GM12878 (cell line): ENCODE measurements at regions of chr2 and their contacts with region 1.

Region 1: DNA sequence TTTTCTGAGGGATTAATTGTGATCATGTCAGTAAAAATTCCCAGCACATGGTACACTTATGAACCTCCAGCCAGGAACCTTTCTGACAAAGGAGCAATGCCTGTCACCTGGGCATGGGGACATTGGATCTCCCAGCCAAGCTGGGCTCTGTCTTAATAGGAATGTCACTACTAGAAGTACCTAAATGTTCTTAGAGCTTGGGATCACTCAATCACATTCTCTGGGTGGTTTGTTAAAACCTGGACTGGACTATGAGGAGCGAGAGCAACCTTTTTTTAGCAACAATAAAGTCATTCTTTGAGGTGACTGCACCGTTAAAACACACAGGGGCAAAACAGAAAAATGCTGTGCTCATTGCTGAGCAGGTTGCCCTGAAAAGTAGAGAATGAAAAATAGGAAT is 6.4 kb upstream of the PPP1CB start:
- DNase-seq: no peak
- ATAC-seq: no peak
- H3K4me3 ChIP-seq: no peak overlapping the region
- H3K27ac ChIP-seq: no peak overlapping the region
- H3K4me1 ChIP-seq: peaks cover 2% of the 10 kb centered on the region; the same call in 1 of the 2 replicates
- H3K27me3 ChIP-seq: no peaks in the 10 kb centered on the region
- CTCF ChIP-seq: no peak
- EP300 ChIP-seq: no peak
- POLR2A ChIP-seq: no peak
- RAD21 ChIP-seq: no peak

Region 2: DNA sequence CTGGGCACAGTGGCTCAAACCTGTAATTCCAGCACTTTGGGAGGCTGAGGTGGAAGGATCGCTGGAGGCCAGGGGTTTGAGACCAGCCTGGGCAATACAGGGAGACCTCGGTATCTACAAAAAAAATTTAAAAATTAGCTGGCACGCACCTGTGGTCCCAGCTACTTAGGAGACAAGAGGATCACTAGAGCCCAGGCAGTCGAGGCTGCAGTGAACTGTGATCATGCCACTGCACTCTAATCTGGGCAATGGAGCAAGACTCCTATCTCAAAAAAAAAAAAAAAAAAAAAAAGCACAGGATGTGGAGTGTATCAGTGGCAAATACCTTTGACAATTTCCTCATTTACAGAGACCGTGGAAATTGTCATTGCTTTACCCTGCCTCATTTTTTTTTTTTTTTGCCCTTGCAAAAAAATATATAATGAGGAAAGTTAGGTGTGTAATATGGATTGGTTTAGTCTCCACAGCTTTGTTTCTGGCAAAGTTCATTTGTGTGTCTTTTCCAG is 14.5 kb before region 1 on chr2:
- CTCF ChIA-PET with region 1: no interaction called
- POLR2A ChIA-PET with region 1: interaction called, 11 read pairs
- RAD21 ChIA-PET with region 1: interaction called, 3 read pairs
- SMC1A ChIA-PET with region 1: interaction called, 5 read pairs
- in situ Hi-C with region 1: no loop called
- intact Hi-C with region 1: no loop called
- DNase-seq: no peak
- ATAC-seq: no peak
- H3K4me3 ChIP-seq: no peak overlapping the region
- H3K27ac ChIP-seq: no peak overlapping the region
- H3K4me1 ChIP-seq: no peaks in the 10 kb centered on the region
- H3K27me3 ChIP-seq: no peaks in the 10 kb centered on the region
- CTCF ChIP-seq: no peak
- EP300 ChIP-seq: no peak
- POLR2A ChIP-seq: no peak
- RAD21 ChIP-seq: no peak